Heart right ventricle (tissue), 16 donors: ENCODE measurements at regions of chr16 and their contacts with region 1.

Region 1: GRCh38 chr16:21708533-21709115 is 44.9 kb downstream of the OTOA start:
- DNase-seq: peak; percentile 28 to 77
- ATAC-seq: peak in 2 of 8 donors; percentile 19 to 49
- H3K4me3 ChIP-seq: no peak overlapping the region
- H3K27ac ChIP-seq: no peak overlapping the region
- H3K4me1 ChIP-seq: peaks cover 0 to 7% (median 0%) of the 10 kb centered on the region in 9 donors
- H3K27me3 ChIP-seq: peaks cover 0 to 7% (median 0%) of the 10 kb centered on the region in 7 donors
- CTCF ChIP-seq: peak; percentile 67 to 89 (median 84)

Region 2: DNA sequence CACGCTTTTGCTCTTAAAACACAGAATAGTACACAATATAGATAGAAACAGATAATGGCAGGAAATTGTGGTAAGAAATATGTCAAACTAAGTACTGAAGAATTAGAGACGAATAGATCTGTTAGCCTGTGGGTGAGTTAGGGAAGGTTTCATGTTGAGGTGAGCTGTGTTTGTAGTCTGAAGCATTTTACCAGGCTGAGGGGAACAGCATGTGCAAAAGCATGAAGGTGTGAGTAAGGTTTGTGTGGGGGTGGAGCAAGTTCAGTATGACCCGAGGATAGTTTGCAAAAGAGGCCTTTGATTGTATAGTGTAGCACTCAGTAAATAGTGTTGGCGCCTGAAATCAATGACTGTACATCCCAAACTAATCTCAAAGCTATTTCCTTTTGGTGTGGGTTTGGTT is 70.0 kb before region 1 on chr16:
- intact Hi-C with region 1: no loop called
- DNase-seq: no peak
- ATAC-seq: no peak
- H3K4me3 ChIP-seq: no peak overlapping the region
- H3K27ac ChIP-seq: peak overlapping the region in 1 of 10 donors; percentile 18
- H3K4me1 ChIP-seq: peaks cover 0 to 13% (median 0%) of the 10 kb centered on the region in 9 donors
- H3K27me3 ChIP-seq: no peaks in the 10 kb centered on the region
- CTCF ChIP-seq: no peak

Region 3: GRCh38 chr16:21656795-21657768 is 51.5 kb before region 1 on chr16:
- intact Hi-C with region 1: loop called (anchors 1 to 10 kb)
- DNase-seq: peak in 1 of 2 donors; percentile 34
- ATAC-seq: peak in 2 of 8 donors; percentile 41 to 51
- H3K4me3 ChIP-seq: no peak overlapping the region
- H3K27ac ChIP-seq: peak overlapping the region in 2 of 10 donors; percentile 14 to 59
- H3K4me1 ChIP-seq: peaks cover 0 to 64% (median 4%) of the 10 kb centered on the region in 9 donors
- H3K27me3 ChIP-seq: no peaks in the 10 kb centered on the region
- CTCF ChIP-seq: peak; percentile 70 to 90 (median 86)